ENCODE measurements at regions of chr11 and their contacts with region 1.

Region 1: GRCh38 chr11:103682318-103683184 is 353.9 kb upstream of the DDI1 start:
- DNase-seq: peak; percentile 60
- H3K4me3 ChIP-seq: no peak overlapping the region
- H3K27ac ChIP-seq: no peak overlapping the region
- H3K4me1 ChIP-seq: peaks cover 4% of the 10 kb centered on the region
- H3K27me3 ChIP-seq: no peaks in the 10 kb centered on the region
- CTCF ChIP-seq: peak; percentile 70

Region 2: DNA sequence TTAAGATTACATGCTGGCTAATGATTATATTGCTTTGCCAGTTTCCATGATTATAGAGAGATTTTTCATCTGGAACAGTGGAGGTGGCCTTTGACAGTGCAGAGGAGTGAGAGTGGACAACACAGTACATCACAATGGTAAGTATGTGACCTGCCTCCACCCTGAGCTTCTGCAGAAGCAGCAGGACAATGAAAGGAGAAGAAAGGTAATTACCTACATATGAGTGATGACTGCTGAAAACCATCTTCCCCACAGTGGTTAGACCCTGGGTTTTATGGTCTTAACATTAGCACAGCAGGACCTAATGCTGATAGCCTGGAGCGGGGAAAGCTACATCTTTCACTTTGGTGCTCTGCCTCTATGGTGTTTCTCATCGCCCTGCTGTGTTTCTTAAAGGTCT is 100.8 kb before region 1 on chr11:
- intact Hi-C with region 1: no loop called
- DNase-seq: no peak
- H3K4me3 ChIP-seq: no peak overlapping the region
- H3K27ac ChIP-seq: no peak overlapping the region
- H3K4me1 ChIP-seq: no peaks in the 10 kb centered on the region
- H3K27me3 ChIP-seq: no peaks in the 10 kb centered on the region
- CTCF ChIP-seq: no peak

Region 3: DNA sequence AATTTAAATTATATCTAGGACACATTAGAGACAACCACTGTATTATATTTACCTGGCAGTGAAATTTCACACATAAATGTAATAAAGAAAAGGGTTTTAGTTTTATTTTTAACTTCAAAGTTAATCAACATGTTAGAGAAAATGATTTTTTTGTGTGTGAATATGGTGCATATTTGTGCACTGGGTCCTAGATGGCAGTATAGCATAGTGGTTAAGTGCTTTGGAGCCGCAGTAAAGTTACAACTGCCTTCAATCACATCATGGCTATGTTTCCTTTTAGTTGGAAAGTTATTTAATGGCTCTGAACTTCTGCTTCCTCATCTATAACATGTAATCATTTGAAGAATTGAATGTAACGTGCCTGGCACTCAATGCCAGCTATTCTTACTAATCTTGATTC is 245.0 kb after region 1 on chr11:
- intact Hi-C with region 1: loop called (anchors 10 kb)
- DNase-seq: no peak
- H3K4me3 ChIP-seq: no peak overlapping the region
- H3K27ac ChIP-seq: no peak overlapping the region
- H3K4me1 ChIP-seq: no peaks in the 10 kb centered on the region
- H3K27me3 ChIP-seq: no peaks in the 10 kb centered on the region
- CTCF ChIP-seq: peak; percentile 31

Region 4: GRCh38 chr11:104151404-104152204 is 469.1 kb after region 1 on chr11:
- intact Hi-C with region 1: loop called (anchors 5 kb)
- DNase-seq: no peak
- H3K4me3 ChIP-seq: no peak overlapping the region
- H3K27ac ChIP-seq: no peak overlapping the region
- H3K4me1 ChIP-seq: no peaks in the 10 kb centered on the region
- H3K27me3 ChIP-seq: no peaks in the 10 kb centered on the region
- CTCF ChIP-seq: no peak

Region 5: GRCh38 chr11:104333977-104334376 is 651.4 kb after region 1 on chr11:
- intact Hi-C with region 1: loop called (anchors 10 kb)
- DNase-seq: no peak
- H3K4me3 ChIP-seq: no peak overlapping the region
- H3K27ac ChIP-seq: no peak overlapping the region
- H3K4me1 ChIP-seq: no peaks in the 10 kb centered on the region
- H3K27me3 ChIP-seq: no peaks in the 10 kb centered on the region
- CTCF ChIP-seq: no peak